Mammary epithelial cell (primary cell): ENCODE measurements at regions of chr2 and their contacts with region 1.

Region 1: GRCh38 chr2:164430166-164430783 is 191.0 kb downstream of the GRB14 start:
- DNase-seq: peak; percentile 14
- H3K4me3 ChIP-seq: no peak overlapping the region
- H3K27ac ChIP-seq: no peak overlapping the region
- H3K4me1 ChIP-seq: no peaks in the 10 kb centered on the region
- H3K27me3 ChIP-seq: peaks cover 3% of the 10 kb centered on the region
- CTCF ChIP-seq: peak; percentile 74 to 75

Region 2: GRCh38 chr2:163155279-163155883 is 1274.9 kb before region 1 on chr2:
- CTCF ChIA-PET with region 1: no interaction called
- dilution Hi-C with region 1: no loop called
- in situ Hi-C with region 1: no loop called
- intact Hi-C with region 1: loop called (anchors 5 kb)
- DNase-seq: peak; percentile 30
- H3K4me3 ChIP-seq: no peak overlapping the region
- H3K27ac ChIP-seq: no peak overlapping the region
- H3K4me1 ChIP-seq: peaks cover 4% of the 10 kb centered on the region
- H3K27me3 ChIP-seq: no peaks in the 10 kb centered on the region
- CTCF ChIP-seq: peak; percentile 59 to 69

Region 3: DNA sequence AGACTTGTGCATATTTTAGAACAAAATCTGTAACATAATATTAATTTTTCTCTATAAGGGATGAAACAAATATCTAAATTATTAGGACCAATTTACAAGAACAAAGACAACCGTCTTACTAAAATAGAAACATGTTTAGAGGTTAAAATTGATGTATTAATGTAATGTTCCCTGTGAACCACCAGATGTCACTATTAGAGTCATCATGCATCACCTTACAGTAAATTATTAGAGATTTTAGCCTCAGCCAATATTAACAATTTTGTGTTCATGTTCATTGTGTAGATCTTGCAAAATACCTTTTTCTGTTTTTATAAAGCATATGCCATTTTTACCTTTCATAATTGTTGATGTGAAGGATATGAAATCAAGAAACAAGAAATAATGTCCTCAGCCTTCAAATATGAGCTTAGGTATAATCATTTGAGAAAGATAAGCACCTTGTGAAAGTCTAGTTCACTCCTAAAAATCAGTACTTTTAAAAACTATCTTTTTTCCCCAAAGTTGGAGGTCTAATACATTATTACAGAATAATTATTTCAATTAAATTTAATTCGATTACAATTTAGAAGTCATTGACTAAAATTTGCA is 1247.4 kb before region 1 on chr2:
- CTCF ChIA-PET with region 1: no interaction called
- dilution Hi-C with region 1: no loop called
- in situ Hi-C with region 1: no loop called
- intact Hi-C with region 1: loop called (anchors 5 kb)
- DNase-seq: no peak
- H3K4me3 ChIP-seq: no peak overlapping the region
- H3K27ac ChIP-seq: no peak overlapping the region
- H3K4me1 ChIP-seq: no peaks in the 10 kb centered on the region
- H3K27me3 ChIP-seq: peaks cover 2% of the 10 kb centered on the region
- CTCF ChIP-seq: peak; percentile 60 to 61

Region 4: DNA sequence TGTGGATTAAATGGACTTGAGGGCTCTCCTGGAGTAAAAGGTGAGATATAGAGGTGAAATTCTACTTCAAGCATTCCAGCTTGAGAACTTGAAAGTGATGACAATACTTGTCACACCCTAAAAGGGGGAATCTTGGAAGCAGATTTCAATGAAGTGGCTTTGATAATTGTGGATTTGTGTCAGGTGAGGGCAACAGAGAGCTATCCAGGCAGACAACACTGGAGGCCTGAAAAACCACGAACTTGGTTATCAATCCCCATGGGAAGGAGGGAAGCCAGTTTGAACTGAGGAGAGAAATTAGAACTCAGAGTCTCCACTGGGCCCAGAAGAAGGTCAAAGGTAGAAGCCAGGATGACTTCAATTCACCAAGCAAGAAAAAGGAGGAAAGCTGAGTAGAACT is 958.3 kb before region 1 on chr2:
- CTCF ChIA-PET with region 1: no interaction called
- dilution Hi-C with region 1: no loop called
- in situ Hi-C with region 1: no loop called
- intact Hi-C with region 1: loop called (anchors 10 kb)
- DNase-seq: peak; percentile 19
- H3K4me3 ChIP-seq: no peak overlapping the region
- H3K27ac ChIP-seq: no peak overlapping the region
- H3K4me1 ChIP-seq: no peaks in the 10 kb centered on the region
- H3K27me3 ChIP-seq: no peaks in the 10 kb centered on the region
- CTCF ChIP-seq: peak; percentile 20 to 65

Region 5: DNA sequence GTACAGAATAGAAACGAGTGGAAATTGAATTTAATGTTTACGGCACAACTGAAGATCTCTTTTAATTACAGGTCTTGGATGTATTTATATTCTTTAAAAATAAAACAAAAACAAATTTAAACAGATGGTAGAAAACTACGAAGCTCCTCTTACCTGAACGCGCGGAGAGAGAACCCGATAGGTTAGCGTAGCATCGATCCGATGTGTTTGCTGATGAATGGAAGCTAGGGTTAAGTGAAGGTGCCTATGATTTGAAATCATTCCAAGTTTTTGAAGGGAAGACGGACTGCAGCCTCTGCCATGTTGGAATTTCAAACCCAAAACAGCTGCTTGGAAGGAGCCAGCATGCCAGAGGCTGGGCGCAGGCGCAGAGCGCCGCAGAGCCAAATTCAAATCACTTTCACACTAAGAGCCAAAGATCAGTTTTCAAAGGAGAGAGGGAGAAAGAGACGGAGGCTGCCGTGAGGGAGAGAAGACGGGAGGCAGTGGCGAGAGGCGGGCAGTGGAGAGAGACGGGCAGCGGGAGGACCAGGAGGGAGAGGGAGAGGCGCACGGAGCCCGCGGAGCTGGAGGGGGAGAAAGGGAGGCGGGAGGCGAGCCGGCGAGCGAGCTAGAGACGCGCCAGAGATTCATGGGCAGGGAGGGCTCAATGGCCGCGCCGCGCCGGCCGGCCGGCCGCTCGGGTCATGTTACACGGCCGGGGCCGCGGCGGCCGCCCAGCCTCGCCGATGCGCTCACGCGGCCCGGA is 694.4 kb before region 1 on chr2 and contains the start of gene FIGN:
- CTCF ChIA-PET with region 1: no interaction called
- dilution Hi-C with region 1: no loop called
- in situ Hi-C with region 1: no loop called
- intact Hi-C with region 1: loop called (anchors 10 kb)
- DNase-seq: peak; percentile 77
- H3K4me3 ChIP-seq: peak within 1 kb of the TSS; percentile 93 to 100 (median 98)
- H3K27ac ChIP-seq: peak within 1 kb of the TSS; percentile 80
- H3K4me1 ChIP-seq: peaks cover 17% of the 10 kb centered on the region
- H3K27me3 ChIP-seq: no peaks in the 10 kb centered on the region
- CTCF ChIP-seq: no peak
- total RNA-seq, gene FIGN: 2.5 to 10.7 TPM

Region 6: GRCh38 chr2:164061129-164061746 is 369.0 kb before region 1 on chr2:
- CTCF ChIA-PET with region 1: interaction called, 4 read pairs
- dilution Hi-C with region 1: no loop called
- in situ Hi-C with region 1: no loop called
- intact Hi-C with region 1: loop called (anchors 1 kb)
- DNase-seq: peak; percentile 28
- H3K4me3 ChIP-seq: no peak overlapping the region
- H3K27ac ChIP-seq: no peak overlapping the region
- H3K4me1 ChIP-seq: no peaks in the 10 kb centered on the region
- H3K27me3 ChIP-seq: peaks cover 3% of the 10 kb centered on the region
- CTCF ChIP-seq: peak; percentile 81 to 88

Region 7: DNA sequence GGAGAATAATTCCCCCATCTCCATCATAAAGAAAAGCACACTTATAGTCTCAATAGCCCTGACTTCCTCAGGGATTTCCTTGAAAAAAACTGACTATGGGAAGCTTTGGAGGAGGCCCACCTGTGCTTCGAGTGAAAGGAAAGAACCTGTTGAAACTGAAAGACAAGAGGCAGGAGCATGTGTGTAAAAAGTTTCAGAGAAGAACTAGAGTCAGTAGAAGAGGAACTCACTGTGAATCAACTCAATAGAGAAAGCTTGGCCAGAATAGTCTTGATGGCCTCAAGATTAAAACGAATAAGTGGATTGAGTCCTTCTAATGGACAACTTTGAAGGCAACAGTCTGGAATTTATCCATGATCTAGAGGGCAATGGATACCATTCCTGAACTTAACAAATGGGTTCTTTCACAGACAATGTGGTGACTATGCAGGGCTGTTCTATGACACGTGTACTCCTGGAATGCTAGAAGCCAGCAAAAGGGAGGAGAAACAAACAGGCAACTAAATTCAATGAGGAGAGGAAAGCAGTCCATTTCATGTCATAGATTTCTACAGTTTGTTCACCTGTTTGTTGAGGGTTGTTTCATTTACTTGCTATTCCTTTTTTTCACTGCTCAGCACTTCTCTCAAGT is 251.3 kb before region 1 on chr2:
- CTCF ChIA-PET with region 1: no interaction called
- dilution Hi-C with region 1: no loop called
- in situ Hi-C with region 1: no loop called
- intact Hi-C with region 1: no loop called
- DNase-seq: peak; percentile 32
- H3K4me3 ChIP-seq: no peak overlapping the region
- H3K27ac ChIP-seq: no peak overlapping the region
- H3K4me1 ChIP-seq: no peaks in the 10 kb centered on the region
- H3K27me3 ChIP-seq: no peaks in the 10 kb centered on the region
- CTCF ChIP-seq: no peak

Region 8: GRCh38 chr2:164538240-164538866 is 108.1 kb after region 1 on chr2:
- CTCF ChIA-PET with region 1: no interaction called
- dilution Hi-C with region 1: no loop called
- in situ Hi-C with region 1: no loop called
- intact Hi-C with region 1: loop called (anchors 5 kb)
- DNase-seq: peak; percentile 27
- H3K4me3 ChIP-seq: no peak overlapping the region
- H3K27ac ChIP-seq: no peak overlapping the region
- H3K4me1 ChIP-seq: no peaks in the 10 kb centered on the region
- H3K27me3 ChIP-seq: no peaks in the 10 kb centered on the region
- CTCF ChIP-seq: peak; percentile 81 to 82